B cell (primary cell): ENCODE measurements at regions of chr18 and their contacts with region 1.

Region 1: GRCh38 chr18:13566941-13567746 is 159.2 kb downstream of the FAM210A start:
- DNase-seq: peak; percentile 88
- ATAC-seq: peak; percentile 60
- H3K4me3 ChIP-seq: peak overlapping the region; percentile 26 to 53 (median 35)
- H3K4me3 Mint-ChIP-seq: peak overlapping the region; percentile 88
- H3K27ac ChIP-seq: peak overlapping the region; percentile 97
- H3K27ac Mint-ChIP-seq: peak overlapping the region; percentile 95
- H3K4me1 ChIP-seq: peaks cover 67 to 72% of the 10 kb centered on the region in 2 donors
- H3K4me1 Mint-ChIP-seq: peaks cover 75% of the 10 kb centered on the region
- H3K27me3 ChIP-seq: no peaks in the 10 kb centered on the region
- H3K27me3 Mint-ChIP-seq: no peaks in the 10 kb centered on the region
- CTCF ChIP-seq: no peak

Region 2: DNA sequence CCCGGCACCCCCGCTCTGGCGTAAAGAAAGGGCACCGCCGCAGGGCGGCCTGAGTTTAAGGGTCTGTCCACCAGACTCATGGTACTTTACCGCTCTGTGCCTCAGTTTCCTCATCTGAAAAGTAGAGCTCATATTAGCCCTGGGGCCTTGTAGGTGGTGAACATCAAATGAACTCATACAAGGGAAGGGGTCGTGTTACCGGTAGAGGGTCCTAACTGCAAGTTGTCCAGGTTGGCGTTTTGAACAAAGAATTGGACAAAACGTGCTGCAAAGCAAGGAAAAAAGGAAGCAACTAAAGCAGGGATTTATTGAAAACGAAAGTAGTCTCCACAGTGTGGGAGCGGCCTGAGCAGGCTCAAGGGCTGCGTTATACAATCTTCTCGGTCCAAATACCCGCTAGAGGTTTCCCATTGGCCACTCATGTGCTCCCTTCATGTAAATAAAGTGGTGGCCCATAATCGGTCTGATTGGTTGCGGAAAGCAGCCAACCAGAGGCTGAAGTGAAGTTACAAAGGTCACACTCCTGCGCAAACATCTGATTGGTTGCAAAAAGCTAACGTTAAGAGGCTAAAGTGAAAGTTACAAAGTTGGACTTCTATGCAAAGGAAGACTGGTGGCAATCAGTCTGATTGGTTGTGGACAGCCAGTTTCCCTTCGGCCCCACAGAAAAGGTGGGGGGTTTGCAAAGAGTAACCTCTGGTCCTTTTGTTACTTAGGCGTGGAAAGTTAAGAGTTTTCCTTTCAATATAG is 429.3 kb before region 1 on chr18:
- CTCF ChIA-PET with region 1: no interaction called
- POLR2A ChIA-PET with region 1: no interaction called
- intact Hi-C with region 1: loop called (anchors 10 kb)
- DNase-seq: peak; percentile 85
- ATAC-seq: peak; percentile 90
- H3K4me3 ChIP-seq: peak overlapping the region; percentile 58 to 98 (median 84)
- H3K4me3 Mint-ChIP-seq: peak overlapping the region; percentile 100
- H3K27ac ChIP-seq: peak overlapping the region; percentile 65 to 86
- H3K27ac Mint-ChIP-seq: peak overlapping the region; percentile 99
- H3K4me1 ChIP-seq: peaks cover 6 to 11% of the 10 kb centered on the region in 2 donors
- H3K4me1 Mint-ChIP-seq: peaks cover 24% of the 10 kb centered on the region
- H3K27me3 ChIP-seq: no peaks in the 10 kb centered on the region
- H3K27me3 Mint-ChIP-seq: no peaks in the 10 kb centered on the region
- CTCF ChIP-seq: no peak

Region 3: DNA sequence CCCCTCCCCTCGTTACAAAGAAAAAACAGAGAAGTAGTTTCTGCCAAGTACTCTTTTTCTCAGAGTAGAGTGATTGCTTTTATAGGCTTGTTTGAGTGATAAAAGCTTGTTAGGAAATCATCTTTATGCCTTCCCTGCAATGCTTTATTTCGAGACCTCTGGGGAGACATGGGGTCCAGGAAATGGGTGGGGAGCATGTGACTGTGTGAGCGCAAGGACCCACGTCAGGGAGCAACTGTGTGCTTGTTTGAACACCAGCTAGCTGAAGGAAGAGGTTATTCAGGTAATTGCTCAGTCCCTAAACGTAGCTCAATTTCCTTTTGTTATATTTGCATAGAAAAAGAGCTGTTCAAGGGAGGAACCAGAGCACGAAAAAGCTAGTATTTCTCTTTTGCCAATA is 28.1 kb before region 1 on chr18:
- CTCF ChIA-PET with region 1: no interaction called
- POLR2A ChIA-PET with region 1: no interaction called
- intact Hi-C with region 1: loop called (anchors 2 kb)
- DNase-seq: peak; percentile 89
- ATAC-seq: peak; percentile 83
- H3K4me3 ChIP-seq: peak overlapping the region in 3 of 5 experiments; percentile 0 to 43 (median 9)
- H3K4me3 Mint-ChIP-seq: peak overlapping the region; percentile 82
- H3K27ac ChIP-seq: peak overlapping the region; percentile 64 to 72
- H3K27ac Mint-ChIP-seq: peak overlapping the region; percentile 87
- H3K4me1 ChIP-seq: peaks cover 38 to 45% of the 10 kb centered on the region in 2 donors
- H3K4me1 Mint-ChIP-seq: peaks cover 48% of the 10 kb centered on the region
- H3K27me3 ChIP-seq: no peaks in the 10 kb centered on the region
- H3K27me3 Mint-ChIP-seq: no peaks in the 10 kb centered on the region
- CTCF ChIP-seq: no peak

Region 4: DNA sequence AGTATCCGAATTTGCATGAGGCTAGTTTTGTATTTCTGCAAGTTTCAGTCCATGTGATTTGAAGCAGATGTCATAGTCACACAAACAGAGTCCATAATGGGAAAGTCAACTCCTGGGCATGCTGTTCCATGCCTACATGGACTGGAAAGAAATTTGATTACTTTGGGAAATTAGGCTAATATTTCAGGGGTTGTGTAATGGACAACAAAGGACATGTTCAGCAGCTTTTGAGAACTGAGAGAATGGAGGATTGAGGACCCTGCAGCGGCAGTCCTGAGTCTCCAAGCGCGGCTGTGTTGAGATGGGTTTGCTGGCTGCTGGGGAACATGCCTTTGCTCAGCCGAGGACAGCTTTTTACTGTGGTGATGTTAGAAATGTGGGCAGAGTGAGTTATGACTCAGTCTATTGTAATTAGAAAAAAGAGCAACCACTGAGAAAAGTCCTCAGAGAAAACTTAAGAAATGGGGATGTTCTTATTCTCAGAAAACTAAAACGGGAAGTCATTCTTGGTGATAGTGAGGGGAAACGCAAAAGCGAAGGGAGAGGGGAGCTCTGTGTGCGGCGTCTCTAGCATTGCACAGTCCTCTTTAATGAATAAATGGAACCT is 10.1 kb after region 1 on chr18:
- CTCF ChIA-PET with region 1: interaction called, 22 read pairs
- POLR2A ChIA-PET with region 1: interaction called, 11 read pairs
- intact Hi-C with region 1: loop called (anchors 1 kb)
- DNase-seq: peak; percentile 73
- ATAC-seq: peak; percentile 87
- H3K4me3 ChIP-seq: peak overlapping the region in 4 of 5 experiments; percentile 28 to 66 (median 47)
- H3K4me3 Mint-ChIP-seq: peak overlapping the region; percentile 73
- H3K27ac ChIP-seq: peak overlapping the region; percentile 51 to 58
- H3K27ac Mint-ChIP-seq: peak overlapping the region; percentile 76
- H3K4me1 ChIP-seq: peaks cover 29 to 39% of the 10 kb centered on the region in 2 donors
- H3K4me1 Mint-ChIP-seq: peaks cover 45% of the 10 kb centered on the region
- H3K27me3 ChIP-seq: no peaks in the 10 kb centered on the region
- H3K27me3 Mint-ChIP-seq: no peaks in the 10 kb centered on the region
- CTCF ChIP-seq: no peak

Region 5: GRCh38 chr18:13585379-13586153 is 18.4 kb after region 1 on chr18:
- CTCF ChIA-PET with region 1: interaction called, 12 read pairs
- POLR2A ChIA-PET with region 1: interaction called, 11 read pairs
- intact Hi-C with region 1: loop called (anchors 1 kb)
- DNase-seq: peak; percentile 77
- ATAC-seq: peak; percentile 78
- H3K4me3 ChIP-seq: peak overlapping the region in 1 of 5 experiments; percentile 21
- H3K4me3 Mint-ChIP-seq: peak overlapping the region; percentile 74
- H3K27ac ChIP-seq: peak overlapping the region; percentile 50 to 76
- H3K27ac Mint-ChIP-seq: peak overlapping the region; percentile 83
- H3K4me1 ChIP-seq: peaks cover 31 to 34% of the 10 kb centered on the region in 2 donors
- H3K4me1 Mint-ChIP-seq: peaks cover 50% of the 10 kb centered on the region
- H3K27me3 ChIP-seq: no peaks in the 10 kb centered on the region
- H3K27me3 Mint-ChIP-seq: no peaks in the 10 kb centered on the region
- CTCF ChIP-seq: no peak

Region 6: GRCh38 chr18:13629841-13630715 is 62.9 kb after region 1 on chr18:
- CTCF ChIA-PET with region 1: interaction called, 344 read pairs
- POLR2A ChIA-PET with region 1: no interaction called
- intact Hi-C with region 1: loop called (anchors 1 kb)
- DNase-seq: peak; percentile 82
- ATAC-seq: peak; percentile 95
- H3K4me3 ChIP-seq: no peak overlapping the region
- H3K4me3 Mint-ChIP-seq: peak overlapping the region; percentile 55
- H3K27ac ChIP-seq: no peak overlapping the region
- H3K27ac Mint-ChIP-seq: peak overlapping the region; percentile 42
- H3K4me1 ChIP-seq: peaks cover 5 to 6% of the 10 kb centered on the region in 2 donors
- H3K4me1 Mint-ChIP-seq: peaks cover 18% of the 10 kb centered on the region
- H3K27me3 ChIP-seq: no peaks in the 10 kb centered on the region
- H3K27me3 Mint-ChIP-seq: no peaks in the 10 kb centered on the region
- CTCF ChIP-seq: peak; percentile 95